Activated CD4-positive, alpha-beta T cell treated with anti-CD3 and anti-CD28 coated beads, Interleukin-2, amount 10 ng/mL, durations not matched to agents 24 days and 14 days (primary cell): ENCODE measurements at regions of chr7 and their contacts with region 1.

Region 1: GRCh38 chr7:134646425-134647305 is at the start of gene BPGM:
- DNase-seq: peak; percentile 99
- H3K4me3 Mint-ChIP-seq: no peak within 1 kb of the TSS
- H3K27ac Mint-ChIP-seq: no peak within 1 kb of the TSS
- H3K4me1 Mint-ChIP-seq: peaks cover 27% of the 10 kb centered on the region
- H3K27me3 Mint-ChIP-seq: no peaks in the 10 kb centered on the region
- total RNA-seq, gene BPGM: 22.3 and 22.6 TPM in 2 replicates

Region 2: GRCh38 chr7:134458806-134459698 is 187.6 kb before region 1 on chr7 and contains the start of gene AKR1B1:
- intact Hi-C with region 1: loop called (anchors 1 kb)
- DNase-seq: peak; percentile 97
- H3K4me3 Mint-ChIP-seq: peak within 1 kb of the TSS; percentile 90
- H3K27ac Mint-ChIP-seq: peak within 1 kb of the TSS; percentile 83
- H3K4me1 Mint-ChIP-seq: peaks cover 39% of the 10 kb centered on the region
- H3K27me3 Mint-ChIP-seq: no peaks in the 10 kb centered on the region
- total RNA-seq, gene AKR1B1: 107 TPM in 2 replicates

Region 3: DNA sequence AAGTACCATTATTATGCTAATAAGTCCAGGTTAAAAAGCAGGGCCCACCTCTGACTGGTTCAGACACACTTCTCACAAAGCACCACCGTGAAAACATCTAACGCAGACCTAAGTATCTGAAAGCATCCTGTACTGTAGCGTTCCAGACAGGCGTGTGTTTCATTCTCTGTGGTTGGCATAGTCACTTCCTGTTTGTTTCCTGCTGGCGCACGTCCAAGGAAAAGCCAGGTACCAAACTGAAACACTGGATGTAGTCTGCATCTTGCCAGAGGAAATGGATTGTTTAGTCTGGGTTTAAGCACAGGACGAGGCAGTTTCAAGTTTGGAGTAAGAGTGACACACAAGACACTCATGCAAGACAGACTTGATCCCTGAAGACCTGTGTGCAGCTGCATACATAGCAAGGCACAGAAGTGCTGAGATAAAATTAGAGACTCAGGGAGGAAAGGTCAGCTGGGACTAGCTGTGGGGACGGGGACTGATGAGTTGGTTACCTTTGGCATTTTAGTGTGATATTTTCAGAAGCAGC is 23.2 kb after region 1 on chr7:
- intact Hi-C with region 1: loop called (anchors 2 kb)
- DNase-seq: peak; percentile 85
- H3K4me3 Mint-ChIP-seq: peak overlapping the region; percentile 16
- H3K27ac Mint-ChIP-seq: peak overlapping the region; percentile 71
- H3K4me1 Mint-ChIP-seq: peaks cover 21% of the 10 kb centered on the region
- H3K27me3 Mint-ChIP-seq: no peaks in the 10 kb centered on the region

Region 4: DNA sequence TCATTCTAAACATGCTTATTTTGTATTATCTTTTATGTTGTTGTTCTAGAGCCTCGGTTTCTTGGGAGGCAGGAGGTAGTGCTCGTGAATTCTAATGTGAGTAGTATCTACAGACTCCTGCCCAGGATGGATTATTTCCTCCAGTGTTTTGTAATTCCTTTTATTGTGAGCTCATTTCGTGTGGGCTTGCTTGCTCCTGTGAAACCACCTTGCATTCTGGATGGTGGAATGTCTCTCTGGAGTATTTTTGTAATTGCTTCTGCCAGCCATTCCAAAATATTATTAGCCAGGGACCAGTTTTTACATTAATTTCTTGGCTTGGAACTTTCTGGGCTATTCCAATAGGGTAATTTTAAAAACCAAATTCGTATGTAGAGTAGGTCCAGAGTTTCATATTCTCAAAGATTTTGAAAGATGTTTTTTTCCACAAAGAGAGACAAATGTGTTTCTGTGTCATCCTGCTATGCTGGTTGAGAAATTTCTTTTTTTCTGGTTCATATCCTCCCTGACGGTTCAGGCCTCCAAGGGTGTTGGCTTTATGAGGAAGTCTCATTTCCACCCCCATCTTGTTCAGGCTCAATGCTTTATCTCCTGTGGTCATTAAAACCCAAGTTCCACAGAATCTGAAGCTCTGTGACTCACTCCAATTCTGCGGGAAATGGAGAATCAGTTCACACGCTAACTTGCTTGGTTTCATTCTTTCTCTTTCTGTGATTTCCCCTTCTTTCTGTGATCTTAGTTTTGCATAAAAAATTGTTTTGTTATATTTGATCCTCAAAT is 91.1 kb after region 1 on chr7:
- intact Hi-C with region 1: loop called (anchors 2 kb)
- DNase-seq: peak; percentile 76
- H3K4me3 Mint-ChIP-seq: peak overlapping the region; percentile 26
- H3K27ac Mint-ChIP-seq: peak overlapping the region; percentile 83
- H3K4me1 Mint-ChIP-seq: peaks cover 28% of the 10 kb centered on the region
- H3K27me3 Mint-ChIP-seq: no peaks in the 10 kb centered on the region

Region 5: DNA sequence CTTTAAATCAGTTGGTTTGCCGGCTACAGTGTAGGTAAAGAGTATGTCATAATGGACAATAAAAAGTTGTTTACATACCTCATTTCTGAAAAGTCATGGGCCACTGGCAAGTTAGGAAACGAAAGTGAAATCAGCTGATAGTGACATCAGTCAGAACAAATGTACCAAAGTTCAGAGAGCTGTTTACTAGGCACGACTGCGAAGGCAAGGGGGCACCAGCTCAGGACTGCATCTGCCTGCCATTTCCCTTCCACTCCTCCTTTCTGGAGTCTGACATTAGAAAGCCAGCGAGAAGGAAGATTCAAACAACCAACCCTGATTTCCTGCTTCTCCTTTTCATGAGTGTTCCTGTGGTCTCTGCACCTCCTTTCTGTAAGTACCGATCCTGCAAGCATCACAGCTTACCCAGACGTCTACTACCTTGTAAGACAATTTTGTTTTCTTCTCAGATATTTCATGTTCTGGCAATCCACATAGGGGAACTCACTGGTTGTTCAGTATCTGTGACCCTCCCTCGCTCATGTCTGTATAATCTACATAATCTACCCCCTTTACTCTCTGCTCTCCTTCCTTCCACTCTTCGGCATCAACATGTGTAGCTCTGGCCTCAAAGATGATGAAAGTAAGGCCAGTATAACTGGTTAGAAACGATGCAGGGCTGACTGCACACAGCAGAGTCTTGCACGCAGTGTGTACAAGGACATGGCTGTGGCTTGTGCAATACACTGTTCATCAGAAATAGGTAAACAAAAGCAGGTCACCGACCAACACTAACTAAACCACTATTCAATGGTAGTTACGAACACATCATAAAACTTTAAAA is 501.4 kb after region 1 on chr7 and contains the start of gene TMEM140:
- intact Hi-C with region 1: loop called (anchors 5 kb)
- DNase-seq: peak; percentile 92
- H3K4me3 Mint-ChIP-seq: peak within 1 kb of the TSS; percentile 91
- H3K27ac Mint-ChIP-seq: peak within 1 kb of the TSS; percentile 95
- H3K4me1 Mint-ChIP-seq: peaks cover 54% of the 10 kb centered on the region
- H3K27me3 Mint-ChIP-seq: no peaks in the 10 kb centered on the region
- total RNA-seq, gene TMEM140: 2.2 TPM in 2 replicates

Region 6: DNA sequence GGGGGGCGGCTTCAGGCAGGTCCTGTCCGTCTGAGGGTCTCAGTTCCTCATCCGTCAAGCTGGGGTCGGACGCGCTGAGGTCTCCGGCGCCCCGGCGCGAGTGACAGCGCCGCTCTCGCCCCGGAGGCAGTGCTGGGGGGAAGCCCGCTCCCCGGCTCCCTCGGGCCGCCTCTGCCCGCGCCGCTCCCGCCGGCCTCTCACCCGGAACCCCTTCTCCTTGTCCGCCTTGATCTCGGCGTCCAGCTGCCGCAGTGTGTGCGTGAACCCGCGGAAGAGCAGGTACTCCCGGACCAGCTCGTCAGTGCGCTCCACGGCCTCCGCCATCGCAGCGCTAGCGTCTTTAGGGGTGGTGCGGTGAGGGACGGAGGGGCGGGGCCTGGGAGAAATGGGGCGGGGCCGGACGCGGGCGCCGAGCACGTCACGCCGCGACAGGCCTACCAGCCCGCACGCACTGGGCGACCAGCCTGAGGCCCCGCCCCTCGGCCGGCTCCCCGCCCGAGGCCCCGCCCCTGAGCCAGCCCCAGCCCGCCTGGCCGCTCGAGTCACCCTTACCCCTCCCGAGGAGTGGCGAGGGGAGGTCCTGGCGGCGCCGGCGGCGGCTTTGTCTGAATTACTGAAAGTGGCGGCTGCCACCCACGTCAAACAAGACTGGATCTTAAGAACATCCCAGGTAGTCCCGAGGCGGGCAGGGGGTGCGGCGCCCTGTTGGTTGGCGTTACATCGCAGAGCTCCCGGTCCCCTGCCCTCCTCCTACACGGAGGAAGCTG is 564.7 kb after region 1 on chr7 and contains the start of gene WDR91:
- intact Hi-C with region 1: loop called (anchors 2 kb)
- DNase-seq: peak; percentile 96
- H3K4me3 Mint-ChIP-seq: peak within 1 kb of the TSS; percentile 95
- H3K27ac Mint-ChIP-seq: peak within 1 kb of the TSS; percentile 98
- H3K4me1 Mint-ChIP-seq: peaks cover 29% of the 10 kb centered on the region
- H3K27me3 Mint-ChIP-seq: no peaks in the 10 kb centered on the region
- total RNA-seq, gene WDR91: 25.8 and 26.6 TPM in 2 replicates

Region 7: GRCh38 chr7:135558337-135558767 is 911.7 kb after region 1 on chr7:
- intact Hi-C with region 1: loop called (anchors 2 kb)
- DNase-seq: peak; percentile 89
- H3K4me3 Mint-ChIP-seq: no peak overlapping the region
- H3K27ac Mint-ChIP-seq: no peak overlapping the region
- H3K4me1 Mint-ChIP-seq: peaks cover 14% of the 10 kb centered on the region
- H3K27me3 Mint-ChIP-seq: peaks cover 2% of the 10 kb centered on the region